GM12878 (cell line): ENCODE measurements at regions of chr9 and their contacts with region 1.

Region 1: GRCh38 chr9:102237520-102237919 is 499.1 kb upstream of the GRIN3A start:
- DNase-seq: no peak
- ATAC-seq: no peak
- H3K4me3 ChIP-seq: no peak overlapping the region
- H3K27ac ChIP-seq: no peak overlapping the region
- H3K4me1 ChIP-seq: no peaks in the 10 kb centered on the region
- H3K27me3 ChIP-seq: no peaks in the 10 kb centered on the region
- CTCF ChIP-seq: no peak
- EP300 ChIP-seq: no peak
- POLR2A ChIP-seq: no peak
- RAD21 ChIP-seq: no peak

Region 2: DNA sequence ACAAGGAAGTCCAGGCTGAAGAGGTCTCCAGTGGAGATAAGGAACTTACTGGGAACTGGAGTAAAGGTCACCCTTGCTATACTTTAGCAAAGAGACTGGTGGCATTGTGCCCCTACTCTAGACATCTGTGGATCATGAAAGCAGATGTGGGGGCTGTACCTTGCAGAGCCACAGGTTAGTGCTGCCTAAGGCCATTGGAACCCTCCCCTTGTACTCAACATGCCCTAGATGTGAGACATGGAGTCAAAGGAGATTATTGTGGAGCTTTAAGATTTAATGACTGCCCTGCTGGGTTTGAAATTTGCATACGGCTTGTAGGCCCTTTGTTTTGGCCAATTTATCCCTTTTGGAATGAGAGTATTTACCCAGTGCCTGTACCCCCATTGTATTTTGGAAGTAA is 101.8 kb before region 1 on chr9:
- CTCF ChIA-PET with region 1: no interaction called
- POLR2A ChIA-PET with region 1: no interaction called
- RAD21 ChIA-PET with region 1: no interaction called
- SMC1A ChIA-PET with region 1: no interaction called
- in situ Hi-C with region 1: loop called (anchors 25 kb)
- intact Hi-C with region 1: no loop called
- DNase-seq: no peak
- ATAC-seq: no peak
- H3K4me3 ChIP-seq: no peak overlapping the region
- H3K27ac ChIP-seq: no peak overlapping the region
- H3K4me1 ChIP-seq: no peaks in the 10 kb centered on the region
- H3K27me3 ChIP-seq: no peaks in the 10 kb centered on the region
- CTCF ChIP-seq: no peak
- EP300 ChIP-seq: no peak
- POLR2A ChIP-seq: no peak
- RAD21 ChIP-seq: no peak

Region 3: DNA sequence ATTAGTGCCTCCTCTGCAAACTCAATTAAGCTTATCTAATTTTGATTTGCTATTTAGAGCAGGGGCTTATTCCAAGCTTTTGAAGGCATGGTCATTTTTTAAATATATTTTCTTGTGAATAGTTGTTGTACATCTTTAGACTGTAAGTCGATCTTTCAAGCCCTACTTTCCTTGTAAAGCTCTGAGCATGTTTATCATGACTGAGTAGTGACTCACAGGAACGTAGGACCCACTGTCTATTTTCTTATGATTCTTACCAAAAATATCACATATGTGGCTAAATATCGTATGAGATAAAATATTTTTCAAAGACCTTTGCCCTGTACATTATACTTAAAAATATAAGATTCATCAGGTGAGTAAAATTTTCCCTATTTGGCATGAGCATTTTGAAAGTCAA is 58.7 kb before region 1 on chr9:
- CTCF ChIA-PET with region 1: no interaction called
- POLR2A ChIA-PET with region 1: no interaction called
- RAD21 ChIA-PET with region 1: no interaction called
- SMC1A ChIA-PET with region 1: no interaction called
- in situ Hi-C with region 1: no loop called
- intact Hi-C with region 1: no loop called
- DNase-seq: no peak
- ATAC-seq: no peak
- H3K4me3 ChIP-seq: no peak overlapping the region
- H3K27ac ChIP-seq: no peak overlapping the region
- H3K4me1 ChIP-seq: no peaks in the 10 kb centered on the region
- H3K27me3 ChIP-seq: no peaks in the 10 kb centered on the region
- CTCF ChIP-seq: no peak
- EP300 ChIP-seq: no peak
- POLR2A ChIP-seq: no peak
- RAD21 ChIP-seq: no peak

Region 4: GRCh38 chr9:102355982-102356381 is 118.5 kb after region 1 on chr9:
- CTCF ChIA-PET with region 1: no interaction called
- POLR2A ChIA-PET with region 1: no interaction called
- RAD21 ChIA-PET with region 1: no interaction called
- SMC1A ChIA-PET with region 1: no interaction called
- in situ Hi-C with region 1: no loop called
- intact Hi-C with region 1: no loop called
- DNase-seq: no peak
- ATAC-seq: no peak
- H3K4me3 ChIP-seq: no peak overlapping the region
- H3K27ac ChIP-seq: no peak overlapping the region
- H3K4me1 ChIP-seq: no peaks in the 10 kb centered on the region
- H3K27me3 ChIP-seq: no peaks in the 10 kb centered on the region
- CTCF ChIP-seq: no peak
- EP300 ChIP-seq: no peak
- POLR2A ChIP-seq: no peak
- RAD21 ChIP-seq: no peak